Prostate gland (tissue), 2 donors: ENCODE measurements at regions of chr5 and their contacts with region 1.

Region 1: GRCh38 chr5:95646554-95647431 is at the start of gene RFESD:
- DNase-seq: peak; percentile 98
- H3K4me3 ChIP-seq: peak within 1 kb of the TSS; percentile 26 to 43
- H3K27ac ChIP-seq: peak within 1 kb of the TSS; percentile 96 to 98
- H3K4me1 ChIP-seq: peaks cover 6% of the 10 kb centered on the region
- H3K27me3 ChIP-seq: no peaks in the 10 kb centered on the region
- CTCF ChIP-seq: peak in 2 of 4 experiments; percentile 12 to 56
- POLR2A ChIP-seq: peak; percentile 94
- total RNA-seq, gene RFESD: 4.0 to 14.8 TPM

Region 2: DNA sequence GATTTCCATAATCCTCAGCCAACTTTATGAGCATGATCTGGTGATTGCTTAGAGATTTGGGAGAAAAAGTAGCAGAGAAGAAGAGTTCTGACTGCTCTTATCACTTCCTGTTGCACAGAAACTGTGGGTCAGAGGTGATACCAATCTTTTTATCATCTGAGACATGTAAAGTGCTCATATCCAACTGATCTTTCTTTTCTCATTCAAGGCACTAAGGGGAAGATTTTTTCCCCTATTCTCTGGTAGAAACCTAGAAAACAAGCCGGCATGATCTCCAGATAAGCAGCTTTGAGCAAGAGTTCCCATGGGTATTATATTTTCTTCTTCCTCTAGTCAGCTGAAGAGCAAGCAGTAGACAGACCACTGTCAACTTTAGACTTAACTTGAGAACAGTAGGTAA is 55.9 kb before region 1 on chr5:
- intact Hi-C with region 1: no loop called
- DNase-seq: no peak
- H3K4me3 ChIP-seq: no peak overlapping the region
- H3K27ac ChIP-seq: no peak overlapping the region
- H3K4me1 ChIP-seq: no peaks in the 10 kb centered on the region
- H3K27me3 ChIP-seq: no peaks in the 10 kb centered on the region
- CTCF ChIP-seq: no peak
- POLR2A ChIP-seq: no peak

Region 3: GRCh38 chr5:95730730-95731570 is 84.2 kb after region 1 on chr5 and contains the start of gene RHOBTB3:
- intact Hi-C with region 1: loop called (anchors 5 kb)
- DNase-seq: peak; percentile 88
- H3K4me3 ChIP-seq: peak within 1 kb of the TSS; percentile 86 to 91
- H3K27ac ChIP-seq: peak within 1 kb of the TSS; percentile 95 to 97
- H3K4me1 ChIP-seq: peaks cover 3% of the 10 kb centered on the region
- H3K27me3 ChIP-seq: no peaks in the 10 kb centered on the region
- CTCF ChIP-seq: peak in 1 of 4 experiments; percentile 14
- POLR2A ChIP-seq: peak; percentile 67
- total RNA-seq, gene RHOBTB3: 87.3 to 134 TPM

Region 4: DNA sequence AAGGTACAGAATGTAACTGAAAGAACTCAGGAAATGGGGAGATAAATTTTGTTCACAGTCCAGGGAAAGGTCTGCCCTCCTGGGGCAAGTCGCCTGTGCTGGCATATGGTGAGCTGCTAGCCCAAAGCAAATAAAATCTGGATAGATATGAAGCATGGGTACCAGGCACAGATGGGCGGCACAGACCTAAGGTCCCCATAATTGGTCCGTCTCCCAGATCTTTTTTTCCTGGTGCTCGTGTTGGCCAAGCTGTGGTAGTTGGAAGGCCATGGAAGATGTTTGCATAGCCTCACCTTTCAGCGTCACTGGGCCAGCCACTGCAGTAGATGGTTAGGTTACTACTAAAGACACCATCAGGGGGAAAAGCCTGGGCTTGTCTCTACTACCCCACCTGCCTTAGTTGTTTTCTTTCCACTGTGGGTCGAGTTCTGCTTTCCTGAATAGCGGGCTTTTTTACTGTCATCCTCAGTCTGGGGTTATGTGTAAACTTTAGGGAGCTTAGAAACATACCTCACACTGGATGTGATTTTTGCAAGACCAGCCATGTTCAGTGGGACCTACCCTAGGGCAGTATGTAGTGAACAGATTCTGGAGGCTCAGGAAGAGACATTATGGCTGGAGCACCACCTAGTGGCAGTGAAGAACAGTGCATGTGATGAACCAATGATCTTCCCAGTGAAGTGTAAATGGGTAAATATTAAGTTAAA is 199.9 kb after region 1 on chr5:
- intact Hi-C with region 1: loop called (anchors 5 kb)
- DNase-seq: peak; percentile 66
- H3K4me3 ChIP-seq: no peak overlapping the region
- H3K27ac ChIP-seq: peak overlapping the region; percentile 22 to 33
- H3K4me1 ChIP-seq: peaks cover 5% of the 10 kb centered on the region
- H3K27me3 ChIP-seq: no peaks in the 10 kb centered on the region
- CTCF ChIP-seq: peak; percentile 83 to 98 (median 94)
- POLR2A ChIP-seq: no peak

Region 5: DNA sequence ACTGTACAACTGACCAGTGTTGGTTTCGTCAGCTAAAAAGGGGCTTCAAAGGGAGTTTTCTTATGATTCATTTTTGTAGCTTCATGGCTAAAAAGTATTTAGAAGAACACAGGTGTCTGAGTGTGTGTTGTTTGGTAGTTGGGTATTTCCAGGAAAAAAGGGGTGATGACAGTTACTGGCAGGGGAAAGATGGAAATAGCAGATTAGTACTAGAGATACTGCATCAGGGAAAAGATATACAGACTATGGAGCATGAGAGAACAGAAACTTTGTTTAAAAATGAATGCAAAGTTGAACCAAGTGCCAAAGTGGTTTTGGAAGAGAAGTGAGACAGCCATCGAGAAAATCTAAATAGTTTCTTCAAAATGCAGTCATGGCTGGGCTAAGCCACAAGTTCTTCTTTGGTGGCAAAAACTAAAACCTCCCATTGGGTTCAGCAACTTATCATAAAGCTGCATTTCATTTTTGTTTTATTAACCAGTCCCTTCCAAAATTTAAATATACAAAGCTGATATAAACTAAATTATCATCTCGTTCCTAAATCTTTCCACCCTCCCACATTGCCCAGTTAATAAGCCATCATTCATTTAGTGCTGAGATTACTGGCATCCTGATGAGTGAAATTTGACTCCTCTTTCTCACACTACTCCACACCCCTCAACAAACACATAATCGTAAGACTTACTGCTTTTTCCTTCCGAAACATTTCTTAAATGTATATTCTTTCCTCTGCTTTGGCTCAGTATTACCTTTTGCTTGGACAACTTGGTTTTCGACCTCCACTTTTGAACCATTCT is 281.3 kb after region 1 on chr5:
- intact Hi-C with region 1: no loop called
- DNase-seq: no peak
- H3K4me3 ChIP-seq: no peak overlapping the region
- H3K27ac ChIP-seq: no peak overlapping the region
- H3K4me1 ChIP-seq: peaks cover 5% of the 10 kb centered on the region
- H3K27me3 ChIP-seq: no peaks in the 10 kb centered on the region
- CTCF ChIP-seq: no peak
- POLR2A ChIP-seq: no peak

Region 6: GRCh38 chr5:95961617-95962474 is 315.1 kb after region 1 on chr5 and contains the start of gene ELL2:
- intact Hi-C with region 1: loop called (anchors 5 kb)
- DNase-seq: peak; percentile 99
- H3K4me3 ChIP-seq: peak within 1 kb of the TSS; percentile 96 to 100
- H3K27ac ChIP-seq: peak within 1 kb of the TSS; percentile 97 to 99
- H3K4me1 ChIP-seq: no peaks in the 10 kb centered on the region
- H3K27me3 ChIP-seq: no peaks in the 10 kb centered on the region
- CTCF ChIP-seq: no peak
- POLR2A ChIP-seq: peak; percentile 93
- total RNA-seq, gene ELL2: 80.0 to 104 TPM